Endothelial cell of umbilical vein (primary cell): ENCODE measurements at regions of chr21 and their contacts with region 1.

Region 1: DNA sequence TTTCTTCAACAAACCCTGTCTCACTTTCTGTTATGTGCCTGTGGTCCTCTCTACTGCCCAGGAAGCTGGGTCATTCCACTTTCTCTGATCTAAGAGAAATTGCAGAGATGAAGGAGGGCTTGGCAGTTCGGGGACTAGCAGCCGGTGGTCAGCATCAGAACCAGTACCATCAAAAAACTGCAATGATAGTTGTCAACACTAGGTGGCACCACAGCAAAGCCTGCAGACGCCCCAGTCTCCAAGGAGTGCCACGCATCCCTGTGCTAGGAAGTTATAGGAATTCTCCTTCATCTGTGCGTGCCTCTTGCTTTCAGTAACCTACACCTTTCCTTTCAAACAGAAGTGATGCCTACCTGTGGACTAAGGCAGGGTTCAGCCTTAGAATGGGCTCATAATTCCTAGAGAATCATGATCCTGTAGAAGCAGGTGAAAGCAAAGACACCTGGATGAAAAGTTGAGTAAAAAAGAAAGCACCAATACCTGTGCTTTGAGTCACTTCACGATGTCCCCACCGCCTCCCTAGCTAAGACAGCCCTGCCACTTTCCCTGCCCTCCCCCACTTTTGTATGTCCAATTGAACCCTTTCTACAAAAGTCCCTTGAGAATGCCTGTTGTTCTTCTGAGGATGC is 129.2 kb downstream of the ADAMTS1 start:
- DNase-seq: peak; percentile 55
- H3K4me3 ChIP-seq: no peak overlapping the region
- H3K27ac ChIP-seq: no peak overlapping the region
- H3K4me1 ChIP-seq: no peaks in the 10 kb centered on the region
- H3K27me3 ChIP-seq: no peaks in the 10 kb centered on the region
- CTCF ChIP-seq: peak; percentile 81 to 89
- POLR2A ChIP-seq: no peak

Region 2: GRCh38 chr21:25881525-25882376 is 834.2 kb before region 1 on chr21:
- CTCF ChIA-PET with region 1: no interaction called
- POLR2A ChIA-PET with region 1: no interaction called
- dilution Hi-C with region 1: no loop called
- intact Hi-C with region 1: loop called (anchors 1 kb)
- DNase-seq: peak; percentile 65
- H3K4me3 ChIP-seq: no peak overlapping the region
- H3K27ac ChIP-seq: no peak overlapping the region
- H3K4me1 ChIP-seq: peaks cover 23% of the 10 kb centered on the region
- H3K27me3 ChIP-seq: no peaks in the 10 kb centered on the region
- CTCF ChIP-seq: peak; percentile 87 to 89
- POLR2A ChIP-seq: no peak

Region 3: GRCh38 chr21:26469789-26470188 is 246.2 kb before region 1 on chr21:
- CTCF ChIA-PET with region 1: no interaction called
- POLR2A ChIA-PET with region 1: no interaction called
- dilution Hi-C with region 1: no loop called
- intact Hi-C with region 1: loop called (anchors 10 kb)
- DNase-seq: no peak
- H3K4me3 ChIP-seq: no peak overlapping the region
- H3K27ac ChIP-seq: no peak overlapping the region
- H3K4me1 ChIP-seq: no peaks in the 10 kb centered on the region
- H3K27me3 ChIP-seq: no peaks in the 10 kb centered on the region
- CTCF ChIP-seq: no peak
- POLR2A ChIP-seq: no peak

Region 4: DNA sequence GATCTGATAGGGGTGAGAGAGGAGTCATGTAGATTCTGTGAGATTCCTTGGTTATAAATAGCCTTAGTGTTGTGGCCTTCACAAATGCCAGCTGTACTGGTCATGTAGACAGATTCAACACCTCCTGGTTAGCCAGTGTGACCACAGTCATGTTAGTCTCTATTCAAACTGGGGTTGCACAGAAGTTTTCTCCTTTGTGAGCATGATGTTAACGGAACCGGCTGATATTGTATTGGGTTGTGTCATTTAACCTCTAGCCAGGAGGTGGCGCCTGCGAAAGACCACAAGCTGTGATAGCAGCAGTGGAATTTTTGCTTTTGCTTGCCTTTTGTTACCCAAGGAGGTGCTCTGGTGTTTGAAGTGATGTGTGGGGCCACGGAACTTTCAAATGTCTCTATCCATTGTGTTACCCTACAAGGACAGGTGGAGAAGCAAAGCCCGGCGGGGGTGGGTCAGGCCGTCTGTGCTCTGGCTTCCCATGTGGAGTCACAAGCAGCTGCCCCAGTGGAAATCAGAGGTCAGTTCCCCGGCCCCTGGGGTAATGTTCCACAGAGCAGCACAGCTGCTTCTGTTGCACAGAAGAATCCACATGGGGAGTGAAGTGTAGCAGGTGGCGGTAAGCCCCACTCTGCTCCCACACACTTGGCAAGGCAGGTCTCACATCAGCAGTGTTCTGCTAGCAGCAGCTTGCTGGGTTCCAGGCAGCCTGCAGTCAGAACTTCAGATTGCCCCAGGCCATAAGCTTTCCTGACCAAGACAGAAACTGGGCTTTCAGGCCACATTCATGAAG is 16.6 kb after region 1 on chr21:
- CTCF ChIA-PET with region 1: interaction called, 12 read pairs
- POLR2A ChIA-PET with region 1: no interaction called
- dilution Hi-C with region 1: no loop called
- intact Hi-C with region 1: no loop called
- DNase-seq: peak; percentile 38
- H3K4me3 ChIP-seq: no peak overlapping the region
- H3K27ac ChIP-seq: no peak overlapping the region
- H3K4me1 ChIP-seq: no peaks in the 10 kb centered on the region
- H3K27me3 ChIP-seq: no peaks in the 10 kb centered on the region
- CTCF ChIP-seq: peak; percentile 48 to 75
- POLR2A ChIP-seq: no peak